ENCODE measurements at regions of chr1 and their contacts with region 1.

Region 1: GRCh38 chr1:150561974-150562445 is 12.8 kb downstream of the ADAMTSL4 start:
- DNase-seq: peak; percentile 84
- CTCF ChIP-seq: no peak

Region 2: DNA sequence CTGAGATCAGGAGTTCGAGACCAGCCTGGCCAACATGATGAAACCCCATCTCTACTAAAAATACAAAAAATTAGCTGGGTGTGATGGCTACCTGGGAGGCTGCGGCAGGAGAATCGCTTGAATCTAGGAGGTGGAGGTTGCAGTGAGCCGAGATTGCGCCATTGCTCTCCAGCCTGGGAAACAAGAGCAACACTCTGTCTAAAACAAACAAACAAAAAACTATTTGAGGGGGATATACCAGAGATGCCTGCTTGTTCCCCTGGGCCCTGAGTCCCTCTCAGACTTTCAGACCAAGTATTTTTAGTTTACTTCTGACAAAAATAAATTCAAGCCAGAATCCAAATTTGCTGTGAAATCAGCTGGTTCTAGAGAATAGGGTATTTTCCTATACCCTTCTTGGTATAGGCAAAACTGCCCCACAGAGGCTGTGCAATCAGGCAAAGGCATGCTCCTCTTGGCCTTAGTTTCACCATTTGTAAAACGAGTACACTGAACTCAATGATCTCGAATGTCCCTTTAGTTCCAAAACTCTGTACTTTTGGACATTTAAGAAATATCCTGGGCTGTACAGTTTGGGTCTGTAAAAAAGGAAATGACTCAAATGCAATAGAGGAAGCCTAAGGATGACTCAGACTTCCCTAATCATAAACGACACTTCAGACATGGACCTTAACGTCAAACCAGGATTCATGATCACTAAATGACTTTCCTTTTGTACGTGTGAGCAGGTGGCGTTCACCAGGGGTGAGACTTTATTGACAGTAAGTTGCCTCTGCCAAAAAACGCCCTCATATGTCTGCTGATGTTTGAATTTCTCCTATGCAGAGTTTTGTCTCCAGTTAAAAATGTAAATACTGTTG is 51.3 kb after region 1 on chr1:
- in situ Hi-C with region 1: loop called (anchors 10 kb)
- DNase-seq: peak; percentile 63
- CTCF ChIP-seq: no peak

Measured in GM13976 (cell line).